Ovary (tissue), 10 donors: ENCODE measurements at regions of chr3 and their contacts with region 1.

Region 1: GRCh38 chr3:129769616-129770015 is 123.9 kb downstream of the TMCC1 start:
- DNase-seq: no peak
- H3K4me3 ChIP-seq: no peak overlapping the region
- H3K27ac ChIP-seq: no peak overlapping the region
- H3K4me1 ChIP-seq: peaks cover 3% of the 10 kb centered on the region
- H3K27me3 ChIP-seq: no peaks in the 10 kb centered on the region
- CTCF ChIP-seq: no peak
- EP300 ChIP-seq: no peak
- POLR2A ChIP-seq: no peak

Region 2: GRCh38 chr3:129756871-129757270 is 12.7 kb before region 1 on chr3:
- intact Hi-C with region 1: loop called in 1 of 4 experiments (anchors 2 kb)
- DNase-seq: no peak
- H3K4me3 ChIP-seq: no peak overlapping the region
- H3K27ac ChIP-seq: no peak overlapping the region
- H3K4me1 ChIP-seq: peaks cover 4% of the 10 kb centered on the region
- H3K27me3 ChIP-seq: no peaks in the 10 kb centered on the region
- CTCF ChIP-seq: no peak
- EP300 ChIP-seq: no peak
- POLR2A ChIP-seq: no peak

Region 3: GRCh38 chr3:129855454-129856419 is 86.1 kb after region 1 on chr3:
- intact Hi-C with region 1: no loop called
- DNase-seq: peak in 2 of 5 donors; percentile 26 to 31
- H3K4me3 ChIP-seq: no peak overlapping the region
- H3K27ac ChIP-seq: peak overlapping the region in 1 of 2 donors; percentile 37
- H3K4me1 ChIP-seq: peaks cover 8% of the 10 kb centered on the region
- H3K27me3 ChIP-seq: no peaks in the 10 kb centered on the region
- CTCF ChIP-seq: no peak
- EP300 ChIP-seq: no peak
- POLR2A ChIP-seq: no peak